HepG2 (cell line): ENCODE measurements at regions of chr16 and their contacts with region 1.

Region 1: GRCh38 chr16:67816240-67817031 is 9.7 kb downstream of the TSNAXIP1 start:
- DNase-seq: peak; percentile 74
- ATAC-seq: peak; percentile 83
- H3K4me3 ChIP-seq: peak overlapping the region in 1 of 3 experiments; percentile 42; a peak in 1 of 6 replicates
- H3K27ac ChIP-seq: no peak overlapping the region
- H3K4me1 ChIP-seq: peaks cover 17% of the 10 kb centered on the region
- H3K27me3 ChIP-seq: 0 out of 5 replicates have a peak, but pooled peaks cover 0 to 2% of the 10 kb centered on the region in 2 experiments
- CTCF ChIP-seq: peak; percentile 99
- EP300 ChIP-seq: peak in 1 of 2 experiments; percentile 35; a peak in 1 of 4 replicates
- POLR2A ChIP-seq: no peak
- RAD21 ChIP-seq: peak; percentile 99

Region 2: GRCh38 chr16:67726106-67727034 is 90.1 kb before region 1 on chr16:
- CTCF ChIA-PET with region 1: no interaction called
- POLR2A ChIA-PET with region 1: no interaction called
- in situ Hi-C with region 1: no loop called
- intact Hi-C with region 1: no loop called
- DNase-seq: peak; percentile 79
- ATAC-seq: peak; percentile 87
- H3K4me3 ChIP-seq: no peak overlapping the region
- H3K27ac ChIP-seq: peak overlapping the region; percentile 74
- H3K4me1 ChIP-seq: peaks cover 17% of the 10 kb centered on the region
- H3K27me3 ChIP-seq: no peaks in the 10 kb centered on the region
- CTCF ChIP-seq: peak; percentile 33
- EP300 ChIP-seq: peak in 1 of 2 experiments; percentile 34; a peak in 1 of 4 replicates
- POLR2A ChIP-seq: no peak
- RAD21 ChIP-seq: 0 out of 2 replicates have a peak, but pooled peaks have one; percentile 6

Region 3: GRCh38 chr16:67833418-67834241 is 17.2 kb after region 1 on chr16:
- CTCF ChIA-PET with region 1: interaction called, 3 read pairs
- POLR2A ChIA-PET with region 1: interaction called, 11 read pairs
- in situ Hi-C with region 1: no loop called
- intact Hi-C with region 1: no loop called
- DNase-seq: peak; percentile 89
- ATAC-seq: peak; percentile 98
- H3K4me3 ChIP-seq: peak overlapping the region; percentile 75 to 91 (median 75)
- H3K27ac ChIP-seq: peak overlapping the region; percentile 59
- H3K4me1 ChIP-seq: peaks cover 37% of the 10 kb centered on the region
- H3K27me3 ChIP-seq: no peaks in the 10 kb centered on the region; a peak in 1 of 5 replicates
- CTCF ChIP-seq: no peak; the same call in 1 of the 2 replicates
- EP300 ChIP-seq: 0 out of 4 replicates have a peak, but pooled peaks of 1 of the 2 experiments have one; percentile 41
- POLR2A ChIP-seq: peak; percentile 92 to 99
- RAD21 ChIP-seq: peak; percentile 36; the same call in 1 of the 2 replicates

Region 4: DNA sequence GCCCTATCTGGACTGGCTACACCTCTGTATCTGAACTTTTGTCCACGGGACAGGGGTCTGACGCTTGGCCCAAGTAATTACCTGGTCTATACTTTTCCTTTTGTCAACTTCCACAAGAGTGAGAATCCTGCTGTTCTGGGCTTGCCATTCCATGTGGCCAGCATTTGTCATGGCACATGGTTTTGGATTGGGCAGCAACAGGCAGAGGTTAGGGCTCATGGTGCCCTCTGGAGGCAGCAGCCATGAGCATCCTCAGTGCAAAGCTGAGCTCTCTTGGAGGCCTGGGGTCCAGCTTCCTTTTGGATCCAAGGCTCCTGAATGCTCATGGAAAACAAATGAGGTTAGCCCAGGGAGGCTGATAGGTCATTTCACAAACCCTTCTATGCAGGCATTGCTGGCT is 48.9 kb after region 1 on chr16:
- CTCF ChIA-PET with region 1: interaction called, 69 read pairs
- POLR2A ChIA-PET with region 1: interaction called, 3 read pairs
- in situ Hi-C with region 1: no loop called
- intact Hi-C with region 1: loop called (anchors 1 kb)
- DNase-seq: peak; percentile 68
- ATAC-seq: peak; percentile 90
- H3K4me3 ChIP-seq: no peak overlapping the region
- H3K27ac ChIP-seq: no peak overlapping the region
- H3K4me1 ChIP-seq: no peaks in the 10 kb centered on the region
- H3K27me3 ChIP-seq: no peaks in the 10 kb centered on the region
- CTCF ChIP-seq: peak; percentile 84
- EP300 ChIP-seq: no peak
- POLR2A ChIP-seq: no peak
- RAD21 ChIP-seq: peak; percentile 91

Region 5: GRCh38 chr16:67883872-67884261 is 67.4 kb after region 1 on chr16:
- CTCF ChIA-PET with region 1: interaction called, 10 read pairs
- POLR2A ChIA-PET with region 1: no interaction called
- in situ Hi-C with region 1: no loop called
- intact Hi-C with region 1: no loop called
- DNase-seq: peak; percentile 51
- ATAC-seq: peak; percentile 79
- H3K4me3 ChIP-seq: no peak overlapping the region
- H3K27ac ChIP-seq: peak overlapping the region; percentile 36
- H3K4me1 ChIP-seq: peaks cover 31% of the 10 kb centered on the region
- H3K27me3 ChIP-seq: no peaks in the 10 kb centered on the region
- CTCF ChIP-seq: peak; percentile 96
- EP300 ChIP-seq: no peak
- POLR2A ChIP-seq: no peak
- RAD21 ChIP-seq: peak; percentile 96

Region 6: GRCh38 chr16:67993189-67994039 is 177.0 kb after region 1 on chr16:
- CTCF ChIA-PET with region 1: no interaction called
- POLR2A ChIA-PET with region 1: no interaction called
- in situ Hi-C with region 1: no loop called
- intact Hi-C with region 1: no loop called
- DNase-seq: peak; percentile 69
- ATAC-seq: peak; percentile 89
- H3K4me3 ChIP-seq: peak overlapping the region; percentile 44 to 74 (median 67); a peak in 5 of 6 replicates
- H3K27ac ChIP-seq: peak overlapping the region; percentile 22
- H3K4me1 ChIP-seq: peaks cover 37% of the 10 kb centered on the region
- H3K27me3 ChIP-seq: peaks cover 2 to 22% of the 10 kb centered on the region in 2 experiments
- CTCF ChIP-seq: peak; percentile 98
- EP300 ChIP-seq: no peak
- POLR2A ChIP-seq: peak; percentile 25 to 40; a peak in 2 of 4 replicates
- RAD21 ChIP-seq: peak; percentile 97

Region 7: DNA sequence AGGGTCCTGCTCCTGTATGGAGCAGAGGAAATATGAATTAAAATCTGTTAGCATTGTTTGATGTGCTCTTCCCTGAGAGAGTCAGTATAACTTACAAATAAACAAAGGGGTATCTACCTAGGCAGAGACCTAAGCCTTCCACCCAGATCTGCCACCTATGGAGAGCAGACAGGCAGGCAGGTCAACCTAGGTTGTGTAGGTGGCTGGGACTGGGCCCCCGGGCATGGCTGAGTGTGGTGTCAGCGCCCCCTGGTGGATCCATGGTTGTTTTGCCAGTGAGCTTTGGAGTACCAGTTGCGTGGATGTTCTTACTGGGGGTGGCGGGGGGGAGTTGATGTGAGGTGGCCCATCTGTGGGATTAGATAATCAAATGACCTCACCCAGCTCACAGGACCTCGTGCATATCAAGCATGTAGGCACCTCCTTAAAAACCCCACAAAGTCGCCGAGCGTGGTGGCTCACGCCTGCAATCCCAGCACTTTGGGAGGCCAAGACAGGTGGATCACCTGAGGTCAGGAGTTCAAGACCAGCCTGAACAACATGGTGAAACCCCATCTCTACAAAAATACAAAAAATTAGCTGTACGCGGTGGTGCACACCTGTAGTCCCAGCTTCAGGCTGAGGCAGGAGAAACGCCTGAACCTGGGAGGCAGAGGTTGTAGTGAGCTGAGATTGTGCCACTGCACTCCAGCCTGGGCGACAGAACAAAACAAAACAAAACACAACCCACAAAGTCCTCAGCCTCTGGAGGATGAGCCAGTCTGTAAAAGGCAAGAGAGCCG is 224.3 kb after region 1 on chr16:
- CTCF ChIA-PET with region 1: interaction called, 7 read pairs
- POLR2A ChIA-PET with region 1: interaction called, 4 read pairs
- in situ Hi-C with region 1: loop called (anchors 10 kb)
- intact Hi-C with region 1: no loop called
- DNase-seq: peak; percentile 82
- ATAC-seq: peak; percentile 99
- H3K4me3 ChIP-seq: no peak overlapping the region
- H3K27ac ChIP-seq: no peak overlapping the region
- H3K4me1 ChIP-seq: peaks cover 5% of the 10 kb centered on the region; the same call in 1 of the 2 replicates
- H3K27me3 ChIP-seq: no peaks in the 10 kb centered on the region
- CTCF ChIP-seq: peak; percentile 95
- EP300 ChIP-seq: no peak
- POLR2A ChIP-seq: no peak
- RAD21 ChIP-seq: peak; percentile 97